Heart right ventricle (tissue), 16 donors: ENCODE measurements at regions of chr13 and their contacts with region 1.

Region 1: GRCh38 chr13:35994131-35994966 is 136.8 kb downstream of the DCLK1 start:
- DNase-seq: peak; percentile 33 to 64
- ATAC-seq: peak; percentile 58 to 97 (median 93)
- H3K4me3 ChIP-seq: no peak overlapping the region
- H3K27ac ChIP-seq: peak overlapping the region in 9 of 10 donors; percentile 4 to 71 (median 52)
- H3K4me1 ChIP-seq: peaks cover 0 to 33% (median 17%) of the 10 kb centered on the region in 9 donors
- H3K27me3 ChIP-seq: no peaks in the 10 kb centered on the region
- CTCF ChIP-seq: no peak

Region 2: DNA sequence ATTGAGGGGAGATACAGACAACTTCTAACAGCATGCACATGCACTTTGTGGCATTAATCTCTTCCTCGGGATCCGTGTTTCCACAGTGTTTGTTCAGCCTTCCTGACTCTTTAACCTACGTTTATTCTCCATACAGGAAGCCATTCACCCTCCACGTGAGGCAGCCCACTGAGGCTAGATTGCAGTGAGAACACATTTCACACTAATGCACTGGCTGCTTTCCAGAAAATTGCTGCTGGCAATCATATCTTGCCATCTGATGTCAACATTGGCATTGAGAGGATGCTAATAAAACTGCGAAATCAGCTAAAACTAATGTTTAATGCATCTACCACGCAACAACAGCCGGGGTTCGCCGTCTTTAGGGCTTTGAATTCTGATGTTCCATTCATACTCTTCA is 106.8 kb after region 1 on chr13:
- intact Hi-C with region 1: no loop called
- DNase-seq: no peak
- ATAC-seq: no peak
- H3K4me3 ChIP-seq: no peak overlapping the region
- H3K27ac ChIP-seq: no peak overlapping the region
- H3K4me1 ChIP-seq: peaks cover 0 to 9% (median 0%) of the 10 kb centered on the region in 9 donors
- H3K27me3 ChIP-seq: no peaks in the 10 kb centered on the region
- CTCF ChIP-seq: no peak

Region 3: GRCh38 chr13:36124236-36124822 is 130.0 kb after region 1 on chr13:
- intact Hi-C with region 1: loop called in 1 of 10 experiments (anchors 10 kb)
- DNase-seq: peak in 1 of 2 donors; percentile 58
- ATAC-seq: peak in 6 of 8 donors; percentile 17 to 64 (median 42)
- H3K4me3 ChIP-seq: no peak overlapping the region
- H3K27ac ChIP-seq: peak overlapping the region in 1 of 10 donors; percentile 24
- H3K4me1 ChIP-seq: peaks cover 0 to 15% (median 5%) of the 10 kb centered on the region in 9 donors
- H3K27me3 ChIP-seq: peaks cover 0 to under 1% (median 0%) of the 10 kb centered on the region in 7 donors
- CTCF ChIP-seq: no peak

Region 4: GRCh38 chr13:36131222-36131930 is 137.0 kb after region 1 on chr13 and contains the start of gene DCLK1:
- intact Hi-C with region 1: loop called in 3 of 10 experiments (anchors 10 kb)
- DNase-seq: peak; percentile 54 to 79
- ATAC-seq: peak; percentile 75 to 93 (median 81)
- H3K4me3 ChIP-seq: peak within 1 kb of the TSS; percentile 18 to 80 (median 60)
- H3K27ac ChIP-seq: peak within 1 kb of the TSS in 9 of 10 donors; percentile 19 to 77 (median 56)
- H3K4me1 ChIP-seq: peaks cover 0 to 30% (median 7%) of the 10 kb centered on the region in 9 donors
- H3K27me3 ChIP-seq: peaks cover 0 to 24% (median 0%) of the 10 kb centered on the region in 7 donors
- CTCF ChIP-seq: peak in 1 of 9 donors; percentile 8
- total RNA-seq, gene DCLK1: 5.8 to 16.9 (median 10.4) TPM

Region 5: DNA sequence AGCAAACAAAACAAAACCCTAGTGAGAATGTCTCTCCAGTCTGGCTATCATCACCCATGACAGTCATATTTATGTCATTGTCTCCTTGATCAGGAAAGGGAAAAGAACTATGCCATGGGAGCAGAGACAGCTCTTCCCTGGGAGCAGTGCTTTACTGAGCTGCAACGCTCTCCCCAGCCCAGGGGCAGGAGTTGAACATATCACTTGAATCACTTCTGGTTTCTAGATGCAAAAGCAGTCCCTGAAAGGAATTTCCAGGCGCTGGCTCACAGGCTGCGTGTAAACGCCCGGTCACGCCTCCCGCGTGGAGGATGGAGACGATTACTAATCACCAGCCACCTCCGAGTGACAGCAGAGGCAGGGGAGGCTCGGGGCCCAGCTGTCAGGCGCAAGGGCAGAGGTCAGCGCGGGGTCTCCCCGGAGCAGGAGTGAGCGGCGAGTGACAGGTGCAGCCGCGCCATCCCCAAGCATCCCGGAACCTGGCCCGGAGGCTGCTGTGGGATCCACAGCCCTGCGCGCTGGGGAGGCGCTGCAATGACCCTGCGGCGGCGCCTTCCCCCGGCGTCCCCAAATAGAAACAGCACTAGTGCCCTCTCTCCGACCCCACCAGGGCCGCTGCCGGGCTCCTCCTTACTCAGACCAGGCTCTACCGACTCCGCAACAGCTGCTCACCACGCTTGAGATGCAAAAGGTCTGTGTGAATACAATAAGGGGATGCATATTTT is 160.4 kb after region 1 on chr13:
- intact Hi-C with region 1: loop called in 2 of 10 experiments (anchors 10 kb)
- DNase-seq: peak; percentile 7 to 27
- ATAC-seq: peak; percentile 63 to 95 (median 80)
- H3K4me3 ChIP-seq: peak overlapping the region in 9 of 10 donors; percentile 18 to 54 (median 41)
- H3K27ac ChIP-seq: peak overlapping the region in 2 of 10 donors; percentile 18 to 37
- H3K4me1 ChIP-seq: peaks cover 0 to 10% (median 7%) of the 10 kb centered on the region in 9 donors
- H3K27me3 ChIP-seq: peaks cover 0 to 11% (median 0%) of the 10 kb centered on the region in 7 donors
- CTCF ChIP-seq: peak in 1 of 9 donors; percentile 12

Region 6: DNA sequence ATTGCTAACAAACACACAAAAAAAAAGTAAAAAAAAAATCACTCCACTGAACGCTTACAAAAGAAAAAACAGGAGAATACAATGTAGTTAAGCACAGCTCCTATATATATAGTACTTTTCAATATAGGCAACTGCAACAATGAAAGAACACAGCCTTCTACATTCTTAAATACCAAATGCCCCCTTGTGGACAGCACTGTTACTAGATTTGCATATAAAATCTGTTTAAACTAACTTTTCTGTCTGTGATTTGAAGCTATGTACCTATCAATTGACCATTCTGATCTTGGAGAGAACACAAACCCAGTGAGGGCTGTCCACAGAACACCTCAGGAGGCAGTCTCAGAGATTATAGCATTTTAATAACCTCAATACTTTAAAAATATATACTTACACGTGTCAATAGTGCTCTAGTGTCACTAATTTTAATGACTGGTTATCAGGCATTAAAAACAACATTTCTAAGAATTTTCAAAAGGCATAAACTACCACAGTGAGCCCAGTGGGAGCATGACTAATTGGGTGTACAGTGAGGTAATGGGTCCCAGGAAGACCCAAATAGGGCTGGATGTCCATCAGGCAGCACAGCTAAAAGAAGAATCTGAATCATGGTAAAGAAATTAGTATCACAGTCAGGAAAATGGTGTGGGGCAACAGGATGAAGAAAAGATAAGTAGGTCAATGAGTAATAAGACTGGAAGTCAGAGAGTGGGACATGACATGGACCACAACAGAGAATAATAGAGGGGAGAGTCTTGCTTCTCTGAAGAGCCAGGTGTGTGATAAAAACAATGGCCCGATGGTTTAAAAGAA is 281.0 kb after region 1 on chr13:
- intact Hi-C with region 1: loop called in 1 of 10 experiments (anchors 5 kb)
- DNase-seq: peak in 1 of 2 donors; percentile 48
- ATAC-seq: peak in 3 of 8 donors; percentile 54 to 60 (median 55)
- H3K4me3 ChIP-seq: no peak overlapping the region
- H3K27ac ChIP-seq: no peak overlapping the region
- H3K4me1 ChIP-seq: no peaks in the 10 kb centered on the region
- H3K27me3 ChIP-seq: no peaks in the 10 kb centered on the region
- CTCF ChIP-seq: peak; percentile 25 to 82 (median 63)